GM18951 (cell line): ENCODE measurements at regions of chr3 and their contacts with region 1.

Region 1: GRCh38 chr3:141452036-141452435 is 34.8 kb upstream of the RASA2 start:
- POLR2A ChIP-seq: no peak

Region 2: DNA sequence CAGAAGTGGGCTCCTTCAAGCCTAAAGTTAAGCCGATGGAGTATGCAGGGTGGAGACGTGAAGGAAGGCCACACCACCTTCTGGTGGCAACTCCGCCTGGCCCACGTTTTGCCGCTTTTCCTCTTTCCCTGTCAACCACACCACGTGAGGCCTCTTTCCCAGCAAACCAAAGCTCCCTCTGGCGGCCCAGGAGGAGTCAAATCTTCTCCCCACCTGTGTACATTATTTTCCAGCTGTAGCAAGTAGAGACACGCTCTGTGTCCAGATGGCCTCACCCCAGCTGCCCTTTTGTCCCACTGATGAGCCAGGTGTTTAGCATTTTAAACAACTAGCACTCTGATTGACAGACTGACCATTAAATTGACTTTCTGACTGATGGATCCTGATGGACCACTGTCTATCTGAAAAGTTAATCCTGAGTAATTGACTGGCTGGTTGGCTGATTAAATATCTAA is 143.4 kb before region 1 on chr3:
- in situ Hi-C with region 1: loop called (anchors 5 kb)
- POLR2A ChIP-seq: no peak

Region 3: GRCh38 chr3:141557961-141558706 is 106.1 kb after region 1 on chr3:
- in situ Hi-C with region 1: loop called (anchors 5 kb)
- POLR2A ChIP-seq: no peak

Region 4: DNA sequence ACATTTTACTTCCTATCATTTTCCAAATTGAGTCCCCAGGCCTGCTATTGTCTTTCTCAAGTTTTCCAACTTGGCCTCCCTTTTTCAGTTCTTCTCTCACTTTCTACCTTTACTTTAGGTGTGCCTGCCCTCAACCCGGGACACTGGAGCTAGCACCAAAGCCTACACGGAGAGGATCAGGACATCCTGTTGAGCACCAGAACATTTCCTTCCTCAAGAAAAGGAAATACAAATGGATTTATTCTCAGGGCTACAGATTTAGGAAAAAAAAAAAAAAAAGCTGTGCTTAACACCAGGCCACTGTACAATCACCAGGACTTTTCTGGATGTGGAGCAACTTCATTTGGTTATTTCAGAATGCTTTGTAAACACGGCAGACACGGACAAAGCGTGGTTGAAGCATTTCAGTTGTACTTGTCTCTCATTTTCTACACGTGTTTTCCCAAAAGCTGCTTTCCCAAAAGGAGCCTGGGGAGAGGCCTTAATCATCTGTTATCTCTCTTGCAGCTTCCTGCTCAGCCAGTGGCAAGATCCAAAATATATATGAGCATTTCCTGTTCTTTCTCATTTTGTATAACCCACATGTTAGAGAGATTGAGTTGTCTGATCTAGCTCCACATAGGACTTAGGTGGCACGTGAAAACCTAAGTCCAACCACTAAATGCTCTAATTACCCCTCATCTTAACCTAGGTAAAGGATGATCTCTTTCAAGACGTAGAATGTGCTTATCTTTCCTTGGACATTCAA is 408.9 kb after region 1 on chr3:
- in situ Hi-C with region 1: no loop called
- POLR2A ChIP-seq: no peak

Region 5: GRCh38 chr3:142077849-142078500 is 625.9 kb after region 1 on chr3:
- in situ Hi-C with region 1: no loop called
- POLR2A ChIP-seq: no peak